ENCODE measurements at regions of chr21 and their contacts with region 1.

Region 1: DNA sequence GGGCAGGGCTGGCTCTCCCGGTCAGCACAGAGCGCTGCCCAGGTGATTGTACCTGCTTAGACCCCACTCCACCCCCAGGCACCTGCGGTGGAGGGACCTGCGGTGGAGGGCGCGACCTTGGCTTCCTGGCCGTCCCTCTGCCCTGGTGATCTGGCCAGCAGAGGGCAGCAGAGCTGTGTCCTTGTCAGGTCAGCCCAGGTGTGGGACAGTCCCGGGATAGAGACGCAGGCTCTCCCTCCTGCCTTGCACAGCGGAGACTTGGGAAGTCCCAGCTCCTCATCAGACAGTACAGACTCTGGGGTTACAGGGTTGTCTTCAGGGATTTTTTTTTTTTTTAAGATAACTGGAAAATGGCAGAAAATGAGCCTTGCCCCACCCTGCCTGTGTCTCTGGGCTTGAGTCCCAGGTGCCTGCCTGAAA is 10.0 kb downstream of the SLX9 start:
- H3K4me3 Mint-ChIP-seq: no peak overlapping the region
- H3K27ac Mint-ChIP-seq: no peak overlapping the region
- H3K4me1 Mint-ChIP-seq: peaks cover 5% of the 10 kb centered on the region
- H3K27me3 Mint-ChIP-seq: no peaks in the 10 kb centered on the region

Region 2: GRCh38 chr21:45087022-45087823 is 137.4 kb after region 1 on chr21:
- intact Hi-C with region 1: no loop called
- H3K4me3 Mint-ChIP-seq: no peak overlapping the region
- H3K27ac Mint-ChIP-seq: no peak overlapping the region
- H3K4me1 Mint-ChIP-seq: peaks cover 14% of the 10 kb centered on the region
- H3K27me3 Mint-ChIP-seq: peaks cover 23% of the 10 kb centered on the region

Region 3: GRCh38 chr21:45127937-45128336 is 178.1 kb after region 1 on chr21:
- intact Hi-C with region 1: loop called (anchors 1 kb)
- H3K4me3 Mint-ChIP-seq: no peak overlapping the region
- H3K27ac Mint-ChIP-seq: no peak overlapping the region
- H3K4me1 Mint-ChIP-seq: peaks cover 48% of the 10 kb centered on the region
- H3K27me3 Mint-ChIP-seq: peaks cover 13% of the 10 kb centered on the region

Region 4: DNA sequence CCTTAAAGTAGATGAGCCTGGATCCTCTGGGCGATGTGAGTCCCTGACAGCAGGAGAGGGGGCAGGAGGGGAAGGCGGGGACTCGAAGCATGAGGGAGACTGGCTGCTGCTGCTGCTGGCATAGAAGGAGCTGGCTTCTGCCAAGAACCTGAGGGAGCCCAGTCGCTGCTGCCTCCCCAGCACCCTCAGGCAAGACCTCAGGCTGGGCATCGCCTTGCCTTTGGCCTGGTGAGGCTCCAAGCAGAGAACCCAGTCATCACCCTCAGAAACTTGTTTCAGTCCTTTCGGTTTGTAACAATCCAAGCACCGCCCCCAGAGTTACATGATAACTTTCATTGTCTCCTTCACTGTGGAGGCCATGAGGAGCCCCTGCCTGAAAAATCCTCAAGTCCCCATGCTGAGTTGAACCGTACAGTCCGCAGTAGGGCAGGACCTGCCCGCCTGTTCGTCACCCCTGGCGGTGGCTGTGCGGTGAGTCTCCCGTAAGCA is 299.1 kb after region 1 on chr21:
- intact Hi-C with region 1: no loop called
- H3K4me3 Mint-ChIP-seq: no peak overlapping the region
- H3K27ac Mint-ChIP-seq: no peak overlapping the region
- H3K4me1 Mint-ChIP-seq: no peaks in the 10 kb centered on the region
- H3K27me3 Mint-ChIP-seq: peaks cover 31% of the 10 kb centered on the region

Measured in dendritic cell treated with granulocyte-macrophage colony-stimulating factor and Interleukin-4, amounts not matched to agents 40 ng/mL and 50 ng/mL, for 4 days (primary cell).